ENCODE measurements at regions of chr12 and their contacts with region 1.

Region 1: GRCh38 chr12:127108360-127109215 is 1158.4 kb upstream of the TMEM132C start:
- DNase-seq: peak in 12 of 14 experiments; percentile 12 to 50 (median 26)
- ATAC-seq: no peak
- H3K4me3 ChIP-seq: no peak overlapping the region
- H3K4me3 Mint-ChIP-seq: no peak overlapping the region
- H3K27ac ChIP-seq: no peak overlapping the region
- H3K27ac Mint-ChIP-seq: no peak overlapping the region
- H3K4me1 ChIP-seq: no peaks in the 10 kb centered on the region
- H3K4me1 Mint-ChIP-seq: no peaks in the 10 kb centered on the region
- H3K27me3 ChIP-seq: no peaks in the 10 kb centered on the region
- H3K27me3 Mint-ChIP-seq: peaks cover 33% of the 10 kb centered on the region
- CTCF ChIP-seq: peak; percentile 59

Region 2: DNA sequence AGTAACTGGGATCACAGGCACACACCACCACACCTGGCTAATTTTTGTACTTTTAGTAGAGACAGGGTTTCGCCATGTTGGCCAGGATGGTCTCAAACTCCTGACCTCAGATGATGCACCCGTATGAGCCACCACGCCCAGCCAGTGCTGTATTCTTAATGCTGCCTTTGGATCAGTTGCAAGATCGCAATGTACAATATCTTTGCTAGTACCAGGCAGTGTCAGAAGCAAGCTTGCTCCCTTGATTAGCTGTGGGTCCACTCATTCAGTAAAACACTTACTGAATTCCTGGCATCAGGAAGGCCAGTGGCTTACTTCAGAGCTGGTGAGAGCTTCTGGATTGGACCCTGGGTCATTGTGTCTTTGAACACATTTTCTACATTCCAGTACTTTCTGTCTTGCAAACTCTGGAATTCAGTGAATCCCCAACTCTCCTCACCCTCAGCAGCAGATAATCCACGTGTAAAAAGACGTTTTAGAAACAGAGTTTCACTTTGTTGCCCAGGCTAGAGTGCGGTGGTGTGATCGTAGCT is 859.7 kb before region 1 on chr12:
- CTCF ChIA-PET with region 1: no interaction called
- POLR2A ChIA-PET with region 1: no interaction called
- intact Hi-C with region 1: no loop called
- DNase-seq: no peak
- ATAC-seq: no peak
- H3K4me3 ChIP-seq: no peak overlapping the region
- H3K4me3 Mint-ChIP-seq: no peak overlapping the region
- H3K27ac ChIP-seq: no peak overlapping the region
- H3K27ac Mint-ChIP-seq: no peak overlapping the region
- H3K4me1 ChIP-seq: no peaks in the 10 kb centered on the region
- H3K4me1 Mint-ChIP-seq: no peaks in the 10 kb centered on the region
- H3K27me3 ChIP-seq: no peaks in the 10 kb centered on the region
- H3K27me3 Mint-ChIP-seq: no peaks in the 10 kb centered on the region
- CTCF ChIP-seq: no peak

Region 3: DNA sequence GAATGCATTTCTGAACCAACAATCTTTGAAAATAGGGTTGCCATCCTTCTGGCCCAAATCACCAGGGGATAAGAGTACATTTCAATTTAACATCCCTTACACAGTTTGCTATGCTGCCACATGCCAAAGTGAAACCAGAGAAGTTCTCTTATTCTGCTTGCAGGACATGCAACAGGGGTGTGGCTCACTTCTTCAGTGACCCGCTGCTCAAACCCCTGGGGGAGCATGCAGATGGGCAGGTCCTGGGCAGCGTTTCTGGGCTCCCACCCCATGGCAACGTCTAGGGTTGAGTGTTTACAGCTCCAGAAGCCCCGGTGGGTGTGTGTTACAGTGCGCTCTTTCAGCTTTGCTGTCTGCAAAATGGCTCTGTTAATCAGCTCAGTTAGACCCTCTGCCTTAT is 147.9 kb before region 1 on chr12:
- CTCF ChIA-PET with region 1: no interaction called
- POLR2A ChIA-PET with region 1: no interaction called
- intact Hi-C with region 1: no loop called
- DNase-seq: no peak
- ATAC-seq: no peak
- H3K4me3 ChIP-seq: no peak overlapping the region
- H3K4me3 Mint-ChIP-seq: no peak overlapping the region
- H3K27ac ChIP-seq: no peak overlapping the region
- H3K27ac Mint-ChIP-seq: no peak overlapping the region
- H3K4me1 ChIP-seq: no peaks in the 10 kb centered on the region
- H3K4me1 Mint-ChIP-seq: no peaks in the 10 kb centered on the region
- H3K27me3 ChIP-seq: no peaks in the 10 kb centered on the region
- H3K27me3 Mint-ChIP-seq: no peaks in the 10 kb centered on the region
- CTCF ChIP-seq: no peak

Region 4: DNA sequence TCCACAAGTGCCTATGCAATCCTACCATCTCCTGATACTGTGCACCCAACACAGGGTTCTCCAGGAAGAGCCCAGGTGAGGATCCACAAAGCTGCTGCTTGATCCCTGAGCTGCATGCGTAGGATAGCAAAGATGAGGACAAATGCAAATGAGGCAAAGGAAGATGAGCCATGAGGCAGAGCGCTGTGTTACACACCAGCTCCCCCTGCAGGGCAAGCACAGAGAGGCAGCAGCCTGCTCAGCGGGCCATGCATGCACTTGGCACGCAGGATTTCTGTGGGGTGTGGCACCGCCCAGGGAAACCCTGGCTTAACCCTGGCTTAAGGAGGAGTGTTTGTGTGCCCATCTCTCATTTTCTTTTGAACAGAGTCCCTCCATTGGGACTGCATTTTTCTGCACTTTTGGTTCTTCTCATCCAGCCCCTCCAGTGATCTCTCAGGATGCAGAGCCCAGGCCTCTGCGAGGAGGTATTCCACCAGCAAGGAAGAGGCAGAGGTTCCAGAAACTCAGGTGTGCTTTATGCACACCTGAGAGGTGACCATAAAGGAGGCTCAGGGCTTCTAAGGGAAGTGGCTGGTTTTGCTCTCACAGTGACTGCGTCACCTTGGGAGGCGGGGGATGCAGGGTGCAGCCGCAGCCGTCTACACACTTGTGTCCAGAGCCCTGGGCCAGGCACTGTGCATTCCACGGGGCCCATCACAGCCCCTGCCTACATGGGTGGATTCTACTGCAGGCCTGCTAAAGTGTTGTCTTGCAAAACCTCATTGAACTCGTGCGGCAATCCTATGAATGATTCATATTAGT is 185.1 kb after region 1 on chr12:
- CTCF ChIA-PET with region 1: no interaction called
- POLR2A ChIA-PET with region 1: no interaction called
- intact Hi-C with region 1: loop called in 1 of 2 experiments (anchors 1 kb)
- DNase-seq: peak in 13 of 14 experiments; percentile 12 to 54 (median 24)
- ATAC-seq: peak; percentile 58
- H3K4me3 ChIP-seq: no peak overlapping the region
- H3K4me3 Mint-ChIP-seq: no peak overlapping the region
- H3K27ac ChIP-seq: no peak overlapping the region
- H3K27ac Mint-ChIP-seq: no peak overlapping the region
- H3K4me1 ChIP-seq: no peaks in the 10 kb centered on the region
- H3K4me1 Mint-ChIP-seq: no peaks in the 10 kb centered on the region
- H3K27me3 ChIP-seq: peaks cover 0 to 3% of the 10 kb centered on the region in 2 experiments
- H3K27me3 Mint-ChIP-seq: no peaks in the 10 kb centered on the region
- CTCF ChIP-seq: peak; percentile 43

Region 5: DNA sequence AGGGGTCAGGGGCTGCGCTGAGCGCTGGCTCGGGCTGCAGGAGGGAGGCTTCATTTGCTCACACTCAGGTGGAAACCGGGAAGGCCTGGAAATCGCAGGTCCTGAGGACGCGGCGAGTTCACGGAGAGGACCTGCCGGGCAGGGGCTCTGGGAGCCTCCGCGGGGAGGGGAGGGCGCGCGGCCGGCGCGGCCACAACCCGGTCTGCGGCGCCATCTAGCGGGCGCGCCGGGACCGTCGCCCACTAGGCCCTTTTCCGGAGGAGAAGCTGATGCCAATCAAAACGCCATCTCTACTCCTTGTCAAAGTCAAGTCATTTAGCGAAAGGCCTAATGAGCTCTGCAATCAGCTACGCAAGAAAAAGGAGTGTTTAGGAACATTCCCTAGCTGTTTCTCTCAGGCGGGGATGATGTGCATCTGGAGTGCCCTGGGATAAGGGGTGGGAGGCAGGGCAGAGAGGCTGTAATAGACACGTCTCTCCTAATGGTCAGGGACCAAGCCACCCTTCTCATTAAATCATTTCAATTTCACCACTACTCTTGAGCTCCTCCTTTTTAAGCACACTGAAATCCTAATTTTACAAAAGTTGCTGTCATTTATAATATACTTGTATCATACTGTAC is 272.6 kb after region 1 on chr12:
- CTCF ChIA-PET with region 1: no interaction called
- POLR2A ChIA-PET with region 1: no interaction called
- intact Hi-C with region 1: loop called in 1 of 2 experiments (anchors 2 kb)
- DNase-seq: peak in 7 of 14 experiments; percentile 2 to 23 (median 10)
- ATAC-seq: no peak
- H3K4me3 ChIP-seq: no peak overlapping the region
- H3K4me3 Mint-ChIP-seq: no peak overlapping the region
- H3K27ac ChIP-seq: no peak overlapping the region
- H3K27ac Mint-ChIP-seq: no peak overlapping the region
- H3K4me1 ChIP-seq: peaks cover 5% of the 10 kb centered on the region
- H3K4me1 Mint-ChIP-seq: no peaks in the 10 kb centered on the region
- H3K27me3 ChIP-seq: no peaks in the 10 kb centered on the region
- H3K27me3 Mint-ChIP-seq: no peaks in the 10 kb centered on the region
- CTCF ChIP-seq: peak; percentile 52

Region 6: GRCh38 chr12:127677537-127678131 is 569.0 kb after region 1 on chr12:
- CTCF ChIA-PET with region 1: no interaction called
- POLR2A ChIA-PET with region 1: no interaction called
- intact Hi-C with region 1: loop called (anchors 10 kb)
- DNase-seq: peak in 13 of 14 experiments; percentile 3 to 40 (median 14)
- ATAC-seq: no peak
- H3K4me3 ChIP-seq: no peak overlapping the region
- H3K4me3 Mint-ChIP-seq: no peak overlapping the region
- H3K27ac ChIP-seq: no peak overlapping the region
- H3K27ac Mint-ChIP-seq: no peak overlapping the region
- H3K4me1 ChIP-seq: no peaks in the 10 kb centered on the region
- H3K4me1 Mint-ChIP-seq: no peaks in the 10 kb centered on the region
- H3K27me3 ChIP-seq: no peaks in the 10 kb centered on the region
- H3K27me3 Mint-ChIP-seq: no peaks in the 10 kb centered on the region
- CTCF ChIP-seq: peak; percentile 59

Region 7: DNA sequence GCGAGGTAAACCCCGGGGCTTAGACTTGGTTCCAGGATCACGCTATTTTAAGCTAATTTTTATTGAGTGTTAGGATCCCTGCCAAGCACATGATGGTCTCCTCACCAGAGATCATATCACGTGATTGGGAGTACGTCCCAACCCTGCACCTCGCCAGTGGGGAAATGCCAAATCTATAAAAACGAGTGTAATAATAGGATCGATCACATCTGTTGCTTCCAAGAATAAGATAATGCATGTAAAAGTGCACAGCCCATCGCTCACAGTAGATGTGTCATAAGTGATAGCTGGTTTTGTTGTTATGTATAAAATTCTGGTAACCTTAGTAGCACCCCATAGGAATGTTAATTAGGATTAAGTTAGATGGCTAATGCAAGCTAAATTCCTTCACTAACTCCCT is 577.3 kb after region 1 on chr12:
- CTCF ChIA-PET with region 1: no interaction called
- POLR2A ChIA-PET with region 1: no interaction called
- intact Hi-C with region 1: loop called in 1 of 2 experiments (anchors 10 kb)
- DNase-seq: no peak
- ATAC-seq: no peak
- H3K4me3 ChIP-seq: no peak overlapping the region
- H3K4me3 Mint-ChIP-seq: no peak overlapping the region
- H3K27ac ChIP-seq: no peak overlapping the region
- H3K27ac Mint-ChIP-seq: no peak overlapping the region
- H3K4me1 ChIP-seq: no peaks in the 10 kb centered on the region
- H3K4me1 Mint-ChIP-seq: no peaks in the 10 kb centered on the region
- H3K27me3 ChIP-seq: no peaks in the 10 kb centered on the region
- H3K27me3 Mint-ChIP-seq: no peaks in the 10 kb centered on the region
- CTCF ChIP-seq: no peak

Region 8: DNA sequence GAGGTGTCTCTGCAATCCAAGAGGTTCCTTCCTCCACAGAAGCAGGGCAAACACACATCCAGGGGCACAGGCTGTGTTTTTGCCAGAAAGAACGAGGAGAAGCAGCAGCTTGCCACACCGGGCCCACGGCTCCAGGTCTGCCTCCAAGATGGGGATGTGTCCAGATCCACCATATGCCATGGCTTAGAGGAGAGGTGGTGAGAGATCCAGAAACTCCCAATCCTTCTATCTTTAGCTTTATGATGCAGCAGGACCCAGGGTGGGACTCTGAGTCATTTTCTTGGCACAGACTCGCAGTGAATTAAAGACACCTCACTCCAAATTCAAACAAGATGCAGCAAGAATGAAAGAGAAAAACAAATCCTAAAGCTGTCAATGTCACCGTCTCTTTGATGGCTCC is 677.0 kb after region 1 on chr12:
- CTCF ChIA-PET with region 1: no interaction called
- POLR2A ChIA-PET with region 1: no interaction called
- intact Hi-C with region 1: no loop called
- DNase-seq: no peak
- ATAC-seq: no peak
- H3K4me3 ChIP-seq: no peak overlapping the region
- H3K4me3 Mint-ChIP-seq: no peak overlapping the region
- H3K27ac ChIP-seq: no peak overlapping the region
- H3K27ac Mint-ChIP-seq: no peak overlapping the region
- H3K4me1 ChIP-seq: no peaks in the 10 kb centered on the region
- H3K4me1 Mint-ChIP-seq: no peaks in the 10 kb centered on the region
- H3K27me3 ChIP-seq: no peaks in the 10 kb centered on the region
- H3K27me3 Mint-ChIP-seq: no peaks in the 10 kb centered on the region
- CTCF ChIP-seq: no peak

Measured in CD4-positive, alpha-beta T cell (primary cell).